GM12878 (cell line): ENCODE measurements at regions of chr2 and their contacts with region 1.

Region 1: GRCh38 chr2:42944779-42945415 is 152.5 kb upstream of the HAAO start:
- DNase-seq: no peak
- ATAC-seq: peak; percentile 39; the same call in 2 of the 3 replicates
- H3K4me3 ChIP-seq: no peak overlapping the region
- H3K27ac ChIP-seq: no peak overlapping the region
- H3K4me1 ChIP-seq: no peaks in the 10 kb centered on the region
- H3K27me3 ChIP-seq: no peaks in the 10 kb centered on the region
- CTCF ChIP-seq: no peak
- EP300 ChIP-seq: no peak
- POLR2A ChIP-seq: no peak
- RAD21 ChIP-seq: no peak

Region 2: GRCh38 chr2:42652086-42652485 is 292.8 kb before region 1 on chr2:
- CTCF ChIA-PET with region 1: no interaction called
- POLR2A ChIA-PET with region 1: no interaction called
- RAD21 ChIA-PET with region 1: no interaction called
- SMC1A ChIA-PET with region 1: no interaction called
- in situ Hi-C with region 1: no loop called
- intact Hi-C with region 1: no loop called
- DNase-seq: no peak
- ATAC-seq: no peak
- H3K4me3 ChIP-seq: no peak overlapping the region
- H3K27ac ChIP-seq: no peak overlapping the region
- H3K4me1 ChIP-seq: no peaks in the 10 kb centered on the region
- H3K27me3 ChIP-seq: no peaks in the 10 kb centered on the region
- CTCF ChIP-seq: no peak
- EP300 ChIP-seq: no peak
- POLR2A ChIP-seq: no peak
- RAD21 ChIP-seq: no peak

Region 3: DNA sequence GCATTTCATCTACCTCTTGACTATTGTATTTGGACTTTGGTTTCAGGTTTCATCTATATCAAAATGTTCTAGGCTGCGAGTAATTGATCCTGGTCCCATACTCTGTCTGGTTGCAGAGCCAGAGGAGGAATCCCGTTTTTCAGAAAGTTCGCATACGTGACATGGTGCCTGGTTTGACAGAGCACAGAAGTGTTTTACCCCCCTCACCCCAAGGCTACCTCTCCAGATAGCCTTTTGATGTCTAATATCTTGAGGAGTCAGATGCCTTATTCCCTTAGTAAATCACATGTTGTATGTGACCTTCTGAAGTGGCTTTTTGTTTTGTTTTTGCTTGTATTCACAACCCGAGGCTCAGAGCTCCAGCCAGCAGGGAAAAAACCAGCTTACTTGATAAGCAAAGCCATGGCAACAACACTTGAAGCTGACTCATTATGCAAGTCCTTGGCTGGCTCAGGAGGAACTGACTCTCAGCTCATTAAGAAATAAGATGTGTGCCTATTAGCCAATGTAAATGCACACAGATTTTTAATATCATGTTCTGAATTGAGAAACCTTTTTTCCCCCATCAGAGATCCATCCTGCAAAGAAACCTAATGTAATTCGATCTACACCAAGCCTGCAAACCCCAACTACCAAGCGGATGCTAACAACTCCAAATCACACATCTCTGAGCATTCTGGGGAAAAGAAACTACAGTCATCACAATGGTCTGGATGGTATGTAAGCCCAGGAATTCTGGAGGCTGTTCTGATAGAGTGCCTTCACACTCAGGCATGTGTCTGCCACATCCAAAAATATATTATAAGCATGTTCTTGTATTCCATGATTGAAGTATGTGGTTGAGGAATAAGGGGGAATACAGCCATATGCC is 222.3 kb before region 1 on chr2:
- CTCF ChIA-PET with region 1: no interaction called
- POLR2A ChIA-PET with region 1: no interaction called
- RAD21 ChIA-PET with region 1: no interaction called
- SMC1A ChIA-PET with region 1: no interaction called
- in situ Hi-C with region 1: no loop called
- intact Hi-C with region 1: no loop called
- DNase-seq: peak; percentile 91
- ATAC-seq: peak; percentile 98
- H3K4me3 ChIP-seq: peak overlapping the region; percentile 10; the same call in 1 of the 2 replicates
- H3K27ac ChIP-seq: peak overlapping the region; percentile 86
- H3K4me1 ChIP-seq: peaks cover 19% of the 10 kb centered on the region
- H3K27me3 ChIP-seq: no peaks in the 10 kb centered on the region
- CTCF ChIP-seq: no peak
- EP300 ChIP-seq: peak; percentile 97
- POLR2A ChIP-seq: no peak
- RAD21 ChIP-seq: 0 out of 2 replicates have a peak, but pooled peaks have one; percentile 23

Region 4: GRCh38 chr2:42828487-42829425 is 116.1 kb before region 1 on chr2:
- CTCF ChIA-PET with region 1: interaction called, 4 read pairs
- POLR2A ChIA-PET with region 1: no interaction called
- RAD21 ChIA-PET with region 1: no interaction called
- SMC1A ChIA-PET with region 1: interaction called, 5 read pairs
- in situ Hi-C with region 1: no loop called
- intact Hi-C with region 1: loop called (anchors 5 kb)
- DNase-seq: peak; percentile 15
- ATAC-seq: peak; percentile 97
- H3K4me3 ChIP-seq: no peak overlapping the region
- H3K27ac ChIP-seq: no peak overlapping the region
- H3K4me1 ChIP-seq: no peaks in the 10 kb centered on the region
- H3K27me3 ChIP-seq: no peaks in the 10 kb centered on the region; a peak in 1 of 4 replicates
- CTCF ChIP-seq: peak; percentile 92 to 98 (median 93)
- EP300 ChIP-seq: no peak
- POLR2A ChIP-seq: no peak
- RAD21 ChIP-seq: peak; percentile 82

Region 5: DNA sequence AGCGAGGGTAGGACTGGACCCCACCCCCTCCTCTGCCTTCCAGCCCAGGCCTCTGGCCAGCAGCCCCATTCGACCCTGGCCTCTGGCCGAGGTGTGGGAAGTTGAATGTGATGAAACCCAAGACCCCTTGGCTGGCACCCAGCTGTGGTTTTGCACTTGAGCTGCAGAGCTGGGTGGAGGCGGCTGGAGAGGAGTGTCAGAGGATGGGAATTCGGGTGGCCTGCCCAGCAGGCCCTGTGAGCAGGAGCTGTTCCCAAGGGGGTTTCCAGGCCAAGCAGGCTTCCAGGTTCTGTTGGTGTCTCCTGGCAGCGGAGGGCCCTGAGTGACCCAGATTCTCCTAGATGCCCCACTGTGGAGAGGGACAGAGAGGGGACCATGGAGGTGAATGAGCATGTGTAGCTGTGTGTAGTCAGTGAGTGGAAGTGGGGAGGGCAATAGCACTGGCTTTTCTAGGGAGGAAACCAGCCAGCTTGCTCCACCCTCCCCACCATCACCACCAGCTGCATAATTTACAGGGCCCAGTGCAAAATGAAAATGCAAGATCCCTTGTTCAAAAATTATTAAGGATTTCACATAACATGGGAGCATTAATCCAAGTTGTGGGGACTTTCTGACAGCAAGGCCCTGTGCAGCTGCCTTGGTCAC is 19.7 kb after region 1 on chr2:
- CTCF ChIA-PET with region 1: interaction called, 17 read pairs
- POLR2A ChIA-PET with region 1: no interaction called
- RAD21 ChIA-PET with region 1: no interaction called
- SMC1A ChIA-PET with region 1: interaction called, 7 read pairs
- in situ Hi-C with region 1: no loop called
- intact Hi-C with region 1: no loop called
- DNase-seq: no peak
- ATAC-seq: no peak
- H3K4me3 ChIP-seq: no peak overlapping the region
- H3K27ac ChIP-seq: no peak overlapping the region
- H3K4me1 ChIP-seq: peaks cover 10% of the 10 kb centered on the region
- H3K27me3 ChIP-seq: peaks cover 0 to 2% of the 10 kb centered on the region in 2 experiments; a peak in 2 of 4 replicates
- CTCF ChIP-seq: no peak
- EP300 ChIP-seq: no peak
- POLR2A ChIP-seq: no peak
- RAD21 ChIP-seq: no peak

Region 6: DNA sequence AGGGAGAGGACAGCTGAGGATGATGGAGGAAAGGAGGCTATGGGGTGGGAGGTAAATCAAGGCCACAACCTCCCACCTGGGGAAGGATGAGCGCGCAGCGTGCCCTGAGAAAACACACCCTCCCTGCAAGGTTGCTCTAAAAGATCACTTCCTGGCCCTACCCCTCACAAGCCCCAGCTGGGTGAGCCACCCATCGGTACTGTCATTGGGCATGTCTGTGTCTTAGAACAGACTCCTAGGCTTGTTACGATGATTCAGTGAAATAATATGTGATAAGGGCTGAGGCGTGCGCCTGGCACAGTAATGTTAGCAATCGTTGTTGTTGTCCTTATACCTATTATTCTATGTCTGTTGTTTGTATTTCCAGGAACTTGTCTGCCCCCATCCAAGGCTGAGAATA is 106.4 kb after region 1 on chr2:
- CTCF ChIA-PET with region 1: no interaction called
- POLR2A ChIA-PET with region 1: no interaction called
- RAD21 ChIA-PET with region 1: no interaction called
- SMC1A ChIA-PET with region 1: no interaction called
- in situ Hi-C with region 1: no loop called
- intact Hi-C with region 1: no loop called
- DNase-seq: no peak
- ATAC-seq: no peak
- H3K4me3 ChIP-seq: no peak overlapping the region
- H3K27ac ChIP-seq: no peak overlapping the region
- H3K4me1 ChIP-seq: no peaks in the 10 kb centered on the region
- H3K27me3 ChIP-seq: no peaks in the 10 kb centered on the region; a peak in 1 of 4 replicates
- CTCF ChIP-seq: no peak
- EP300 ChIP-seq: no peak
- POLR2A ChIP-seq: no peak
- RAD21 ChIP-seq: no peak

Region 7: GRCh38 chr2:43105586-43106558 is 161.0 kb after region 1 on chr2:
- CTCF ChIA-PET with region 1: no interaction called
- POLR2A ChIA-PET with region 1: interaction called, 3 read pairs
- RAD21 ChIA-PET with region 1: interaction called, 3 read pairs
- SMC1A ChIA-PET with region 1: no interaction called
- in situ Hi-C with region 1: no loop called
- intact Hi-C with region 1: loop called (anchors 5 kb)
- DNase-seq: peak; percentile 35
- ATAC-seq: peak; percentile 80
- H3K4me3 ChIP-seq: no peak overlapping the region; the same call in 1 of the 2 replicates
- H3K27ac ChIP-seq: peak overlapping the region; percentile 44
- H3K4me1 ChIP-seq: peaks cover 40% of the 10 kb centered on the region
- H3K27me3 ChIP-seq: no peaks in the 10 kb centered on the region
- CTCF ChIP-seq: peak; percentile 10 to 47 (median 36); a peak in 4 of 6 replicates
- EP300 ChIP-seq: no peak
- POLR2A ChIP-seq: no peak
- RAD21 ChIP-seq: peak; percentile 34; the same call in 1 of the 2 replicates

Region 8: DNA sequence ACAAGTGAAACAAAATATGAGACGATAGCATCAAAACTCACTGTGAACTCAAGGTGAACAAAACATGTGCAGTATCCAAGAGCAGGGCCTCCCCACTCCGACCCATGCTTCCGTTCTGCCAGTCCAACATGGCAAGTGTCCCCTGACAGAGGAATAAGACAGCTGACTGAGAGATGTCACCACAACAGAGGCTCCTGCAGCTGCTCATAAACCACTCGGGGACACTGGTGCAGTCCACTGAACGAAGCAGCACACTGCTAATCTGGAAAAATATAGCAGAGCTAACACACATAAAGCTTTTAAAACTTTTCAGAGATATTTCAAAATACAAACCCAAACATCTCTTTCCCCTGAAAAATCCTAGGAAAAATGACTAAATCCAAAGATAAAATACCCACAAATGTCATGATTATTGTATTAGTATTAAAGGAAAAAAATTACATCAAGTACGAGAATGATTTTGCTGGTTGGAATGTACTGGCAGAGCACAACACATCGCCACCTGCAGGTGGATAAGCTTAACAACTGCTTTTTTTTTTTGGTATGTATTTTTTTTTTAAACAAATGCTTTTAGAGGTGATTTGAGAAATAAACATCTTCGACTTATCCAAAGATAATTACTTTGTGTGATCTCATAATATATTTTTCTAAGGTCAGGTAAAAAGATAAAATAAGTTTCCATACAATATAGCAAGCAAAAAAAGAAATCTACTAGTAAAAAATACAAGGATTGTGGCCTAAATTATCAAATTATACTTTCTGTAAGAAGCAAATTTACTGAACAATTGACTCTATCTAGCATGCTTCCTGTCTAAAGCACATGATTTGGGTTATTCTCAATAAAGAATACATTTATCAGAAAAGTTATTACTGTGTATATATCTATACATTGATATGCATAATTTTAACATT is 632.3 kb after region 1 on chr2:
- CTCF ChIA-PET with region 1: interaction called, 18 read pairs
- POLR2A ChIA-PET with region 1: no interaction called
- RAD21 ChIA-PET with region 1: interaction called, 6 read pairs
- SMC1A ChIA-PET with region 1: interaction called, 3 read pairs
- in situ Hi-C with region 1: no loop called
- intact Hi-C with region 1: no loop called
- DNase-seq: no peak
- ATAC-seq: peak; percentile 45; the same call in 1 of the 3 replicates
- H3K4me3 ChIP-seq: no peak overlapping the region
- H3K27ac ChIP-seq: no peak overlapping the region
- H3K4me1 ChIP-seq: no peaks in the 10 kb centered on the region
- H3K27me3 ChIP-seq: no peaks in the 10 kb centered on the region
- CTCF ChIP-seq: peak; percentile 64 to 73 (median 70); a peak in 5 of 6 replicates
- EP300 ChIP-seq: no peak
- POLR2A ChIP-seq: no peak
- RAD21 ChIP-seq: peak; percentile 61